Activated CD4-positive, alpha-beta T cell treated with anti-CD3 and anti-CD28 coated beads, Interleukin-2, amount 10 ng/mL, durations not matched to agents 24 days and 14 days (primary cell): ENCODE measurements at regions of chr10 and their contacts with region 1.

Region 1: GRCh38 chr10:68074775-68075549 is at the start of gene HERC4:
- DNase-seq: peak; percentile 96
- H3K4me3 Mint-ChIP-seq: peak within 1 kb of the TSS; percentile 94
- H3K27ac Mint-ChIP-seq: peak within 1 kb of the TSS; percentile 91
- H3K4me1 Mint-ChIP-seq: peaks cover 31% of the 10 kb centered on the region
- H3K27me3 Mint-ChIP-seq: no peaks in the 10 kb centered on the region
- total RNA-seq, gene HERC4: 45.2 and 49.1 TPM in 2 replicates

Region 2: GRCh38 chr10:67779465-67780203 is 295.3 kb before region 1 on chr10:
- intact Hi-C with region 1: no loop called
- DNase-seq: peak; percentile 93
- H3K4me3 Mint-ChIP-seq: no peak overlapping the region
- H3K27ac Mint-ChIP-seq: peak overlapping the region; percentile 5
- H3K4me1 Mint-ChIP-seq: peaks cover 32% of the 10 kb centered on the region
- H3K27me3 Mint-ChIP-seq: no peaks in the 10 kb centered on the region

Region 3: DNA sequence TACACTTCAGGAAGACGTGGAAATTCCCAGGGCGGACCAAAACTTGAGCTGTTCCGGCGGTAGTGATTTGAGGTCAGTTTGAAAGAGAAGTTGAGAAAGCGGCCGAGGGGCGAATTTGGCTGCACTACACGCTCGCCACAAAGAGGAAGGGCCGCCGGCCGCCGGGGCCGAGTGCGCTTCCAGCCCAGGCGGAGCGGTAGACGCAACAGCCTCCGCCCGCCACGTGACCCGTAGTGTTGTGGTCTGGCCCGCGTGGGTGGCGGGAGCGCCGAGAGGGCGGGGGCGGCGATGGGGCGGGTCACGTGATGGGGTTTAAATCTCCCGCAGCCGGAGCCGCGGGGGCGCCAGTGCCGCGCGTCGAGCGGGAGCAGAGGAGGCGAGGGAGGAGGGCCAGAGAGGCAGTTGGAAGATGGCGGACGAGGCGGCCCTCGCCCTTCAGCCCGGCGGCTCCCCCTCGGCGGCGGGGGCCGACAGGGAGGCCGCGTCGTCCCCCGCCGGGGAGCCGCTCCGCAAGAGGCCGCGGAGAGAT is 190.6 kb before region 1 on chr10 and contains the start of gene SIRT1:
- intact Hi-C with region 1: loop called (anchors 1 kb)
- DNase-seq: peak; percentile 98
- H3K4me3 Mint-ChIP-seq: peak within 1 kb of the TSS; percentile 97
- H3K27ac Mint-ChIP-seq: peak within 1 kb of the TSS; percentile 90
- H3K4me1 Mint-ChIP-seq: peaks cover 23% of the 10 kb centered on the region
- H3K27me3 Mint-ChIP-seq: peaks cover 3% of the 10 kb centered on the region
- total RNA-seq, gene SIRT1: 27.1 and 27.8 TPM in 2 replicates

Region 4: GRCh38 chr10:68043030-68043429 is 31.9 kb before region 1 on chr10:
- intact Hi-C with region 1: loop called (anchors 1 kb)
- DNase-seq: no peak
- H3K4me3 Mint-ChIP-seq: no peak overlapping the region
- H3K27ac Mint-ChIP-seq: peak overlapping the region; percentile 67
- H3K4me1 Mint-ChIP-seq: peaks cover 8% of the 10 kb centered on the region
- H3K27me3 Mint-ChIP-seq: no peaks in the 10 kb centered on the region

Region 5: DNA sequence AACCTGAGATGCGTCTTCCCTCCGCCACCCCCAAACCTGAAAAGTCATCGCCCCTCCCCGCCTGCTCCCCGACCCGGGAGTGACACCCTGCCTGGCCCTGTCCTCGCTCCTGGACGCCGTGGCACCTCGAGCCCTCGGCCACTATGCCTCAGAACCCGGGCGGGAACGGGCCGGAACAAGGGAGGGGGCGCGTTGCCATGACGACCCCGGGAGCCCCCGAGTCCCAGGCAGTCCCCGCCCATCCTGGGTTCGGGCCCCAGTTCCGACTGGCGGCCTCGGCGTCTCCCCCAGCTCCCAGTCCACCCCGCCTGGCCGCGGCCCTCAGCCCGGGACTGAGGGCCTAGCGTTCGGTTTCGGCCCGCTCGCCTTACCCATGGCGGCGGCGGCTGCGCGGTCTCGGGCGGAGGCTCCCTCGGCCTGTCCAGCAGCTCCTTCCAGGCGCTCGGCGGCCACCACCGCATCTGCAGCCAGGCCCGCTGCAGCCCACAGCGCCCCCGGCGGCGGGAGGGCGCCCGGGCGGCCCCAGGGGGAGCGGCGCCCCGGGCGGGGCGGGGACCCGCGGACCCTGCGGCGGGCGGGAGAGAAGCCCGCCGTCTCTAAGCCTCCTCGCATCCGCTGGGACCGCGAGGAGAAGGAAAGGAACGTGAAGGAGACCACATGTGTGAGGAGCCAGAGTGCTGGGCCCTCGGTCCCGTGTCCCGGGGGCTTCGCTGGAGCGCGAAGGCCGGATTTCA is 332.0 kb after region 1 on chr10 and contains the start of gene RUFY2:
- intact Hi-C with region 1: loop called (anchors 1 kb)
- DNase-seq: peak; percentile 95
- H3K4me3 Mint-ChIP-seq: peak within 1 kb of the TSS; percentile 93
- H3K27ac Mint-ChIP-seq: peak within 1 kb of the TSS; percentile 88
- H3K4me1 Mint-ChIP-seq: peaks cover 19% of the 10 kb centered on the region
- H3K27me3 Mint-ChIP-seq: no peaks in the 10 kb centered on the region
- total RNA-seq, gene RUFY2: 9.5 and 10.3 TPM in 2 replicates